Left colon (tissue), 2 donors: ENCODE measurements at regions of chr6 and their contacts with region 1.

Region 1: DNA sequence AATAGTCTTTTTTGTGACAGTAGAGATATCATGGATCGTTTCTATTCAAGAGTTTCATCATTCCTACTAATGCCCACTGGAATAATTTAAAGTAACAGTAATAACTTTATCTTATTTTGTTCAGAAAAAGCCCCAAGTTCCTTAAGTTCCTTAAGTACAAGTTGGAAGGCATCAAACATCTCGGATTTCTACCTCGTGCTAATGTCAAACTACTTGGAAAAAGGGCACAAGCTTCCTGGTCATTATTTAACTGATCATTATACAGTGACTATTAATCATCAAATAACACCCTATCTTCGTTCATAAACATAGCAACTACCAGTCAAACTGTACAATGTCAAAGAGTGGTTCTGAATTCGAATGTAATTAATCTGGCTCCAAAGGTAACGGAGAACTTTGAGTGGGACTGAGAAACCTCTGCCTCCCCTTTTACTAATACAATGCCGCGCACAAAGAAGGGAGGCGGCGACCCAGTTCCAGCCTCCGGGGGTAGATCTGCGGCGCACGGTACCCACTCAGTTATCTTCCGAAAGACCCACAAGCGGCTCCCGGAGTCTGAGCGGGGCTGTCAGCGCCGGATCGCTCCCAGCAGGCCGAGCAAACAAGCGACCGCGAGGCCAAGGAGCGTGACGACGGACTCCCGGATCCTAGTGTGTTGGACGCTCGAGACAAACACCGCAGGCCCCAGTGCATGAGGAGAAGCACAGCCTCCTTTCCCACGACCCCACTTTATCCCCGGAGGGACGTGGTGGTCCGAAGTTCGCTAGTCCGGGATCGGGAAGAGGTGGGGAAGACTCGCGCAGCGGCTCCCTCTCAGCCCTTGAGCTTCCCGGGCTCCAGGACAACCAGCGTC is 716 bp downstream of the SHPRH start:
- DNase-seq: peak; percentile 45 to 58
- ATAC-seq: peak; percentile 59

Region 2: GRCh38 chr6:145415616-145416015 is 547.8 kb before region 1 on chr6:
- intact Hi-C with region 1: no loop called
- DNase-seq: no peak
- ATAC-seq: no peak

Region 3: GRCh38 chr6:145887969-145888368 is 75.5 kb before region 1 on chr6:
- intact Hi-C with region 1: no loop called
- DNase-seq: peak in 1 of 2 donors; percentile 19
- ATAC-seq: peak; percentile 58

Region 4: GRCh38 chr6:146543211-146543939 is 579.9 kb after region 1 on chr6 and contains the start of gene RAB32:
- intact Hi-C with region 1: loop called in 1 of 2 experiments (anchors 10 kb)
- DNase-seq: peak; percentile 93 to 94
- ATAC-seq: peak; percentile 94
- total RNA-seq, gene RAB32: 42.6 to 48.9 TPM